ENCODE measurements at regions of chr17 and their contacts with region 1.

Region 1: DNA sequence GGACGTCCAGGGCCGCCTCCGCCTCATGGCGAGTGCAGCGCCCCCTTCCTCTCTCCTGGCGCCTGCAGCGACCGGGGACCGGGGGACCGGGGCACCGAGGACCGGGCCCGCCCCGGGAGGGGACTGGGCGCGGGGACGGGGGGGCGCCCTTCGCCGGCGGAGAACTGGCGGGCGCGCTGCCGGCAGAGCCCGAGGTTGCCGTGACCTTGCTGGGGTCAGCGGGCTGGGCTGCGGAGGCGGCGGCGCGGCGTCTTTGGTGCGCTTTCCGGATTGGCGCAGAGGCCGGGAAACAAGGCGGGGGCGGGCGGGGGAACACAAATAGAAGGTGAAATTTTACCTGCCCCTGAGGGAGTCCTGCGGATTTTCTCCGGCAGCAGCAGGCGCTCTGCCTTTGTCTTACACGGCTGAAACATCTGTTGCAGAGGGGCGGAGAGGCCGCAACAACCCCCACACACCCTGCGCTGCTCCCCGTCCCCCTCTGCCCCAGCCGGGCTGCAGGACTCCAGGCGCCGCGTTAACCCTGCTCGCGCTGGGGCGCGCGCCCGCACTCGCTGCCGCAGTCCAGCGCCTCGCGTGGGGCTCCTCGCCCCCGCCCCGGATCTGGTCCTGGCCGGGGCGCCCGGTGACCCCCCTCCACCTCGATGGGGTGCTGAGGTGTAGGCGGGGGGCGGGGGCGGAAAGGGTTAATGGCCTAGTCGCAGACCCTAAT is 53.5 kb downstream of the SREBF1 start:
- DNase-seq: peak; percentile 73 to 76
- H3K4me3 ChIP-seq: peak overlapping the region; percentile 48 to 50
- H3K27ac ChIP-seq: peak overlapping the region; percentile 91 to 94
- H3K4me1 ChIP-seq: peaks cover 8 to 39% of the 10 kb centered on the region in 2 donors
- H3K27me3 ChIP-seq: no peaks in the 10 kb centered on the region
- CTCF ChIP-seq: peak in 1 of 4 experiments; percentile 13
- POLR2A ChIP-seq: peak in 1 of 2 donors; percentile 20

Region 2: GRCh38 chr17:17191346-17191792 is 591.9 kb before region 1 on chr17:
- intact Hi-C with region 1: no loop called
- DNase-seq: peak; percentile 36 to 44
- H3K4me3 ChIP-seq: no peak overlapping the region
- H3K27ac ChIP-seq: peak overlapping the region; percentile 69 to 75
- H3K4me1 ChIP-seq: peaks cover 0 to 12% of the 10 kb centered on the region in 2 donors
- H3K27me3 ChIP-seq: no peaks in the 10 kb centered on the region
- CTCF ChIP-seq: no peak
- POLR2A ChIP-seq: no peak

Region 3: GRCh38 chr17:17694169-17695081 is 88.8 kb before region 1 on chr17:
- intact Hi-C with region 1: loop called (anchors 10 kb)
- DNase-seq: peak; percentile 82 to 85
- H3K4me3 ChIP-seq: peak overlapping the region; percentile 56 to 91
- H3K27ac ChIP-seq: peak overlapping the region; percentile 90 to 99
- H3K4me1 ChIP-seq: peaks cover 10 to 43% of the 10 kb centered on the region in 2 donors
- H3K27me3 ChIP-seq: no peaks in the 10 kb centered on the region
- CTCF ChIP-seq: peak in 1 of 4 experiments; percentile 15
- POLR2A ChIP-seq: peak; percentile 65 to 76

Region 4: DNA sequence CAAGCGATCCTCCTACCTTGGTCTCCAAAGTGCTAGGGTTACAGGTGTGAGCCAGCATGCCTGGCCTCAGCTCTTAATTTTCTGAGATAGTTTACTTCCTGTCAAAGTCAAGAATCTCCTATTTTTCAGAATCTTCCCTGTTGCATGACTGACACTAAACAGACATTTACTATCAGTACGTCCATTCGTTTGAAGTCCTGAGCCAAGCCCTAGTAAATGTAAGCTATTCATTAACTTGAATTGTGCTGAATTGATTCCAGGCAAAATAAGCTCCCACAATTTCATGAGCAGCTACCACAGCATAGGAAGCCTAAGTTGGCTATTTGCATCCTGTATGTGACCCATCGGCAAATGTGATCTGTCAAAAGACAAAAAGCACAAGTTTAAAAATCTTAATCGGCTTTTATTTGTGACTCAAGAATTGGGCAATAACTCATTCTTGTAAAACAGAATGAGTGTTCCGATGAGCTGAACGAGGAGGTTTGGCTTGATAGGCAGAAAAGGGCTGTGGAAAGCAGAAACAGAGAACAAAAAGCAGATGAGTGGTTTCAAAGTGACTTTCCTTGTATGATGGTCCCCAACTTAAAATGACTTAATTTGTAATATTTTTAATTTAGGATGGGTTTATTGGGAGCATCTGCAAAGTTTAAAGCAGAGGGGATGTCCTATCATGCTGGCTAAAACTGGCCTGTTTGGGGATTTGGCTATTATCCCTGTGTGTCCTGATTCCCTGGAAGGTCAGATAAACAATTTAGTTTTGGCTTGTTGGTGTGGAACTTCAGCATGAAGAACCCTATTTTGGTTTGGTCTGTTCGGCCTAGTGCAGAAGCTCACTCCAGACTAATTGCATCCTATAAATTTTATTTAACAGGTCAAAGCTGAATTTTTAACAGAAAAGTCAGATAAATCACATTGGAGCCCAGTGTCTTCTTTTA is 1641.9 kb after region 1 on chr17:
- intact Hi-C with region 1: no loop called
- DNase-seq: no peak
- H3K4me3 ChIP-seq: no peak overlapping the region
- H3K27ac ChIP-seq: peak overlapping the region; percentile 78 to 82
- H3K4me1 ChIP-seq: no peaks in the 10 kb centered on the region
- H3K27me3 ChIP-seq: no peaks in the 10 kb centered on the region
- CTCF ChIP-seq: no peak
- POLR2A ChIP-seq: no peak